ENCODE measurements at regions of chr2 and their contacts with region 1.

Region 1: GRCh38 chr2:39513641-39514094 is 76.6 kb upstream of the MAP4K3 start:
- DNase-seq: peak; percentile 95
- H3K4me3 ChIP-seq: no peak overlapping the region
- H3K27ac ChIP-seq: peak overlapping the region; percentile 31
- H3K4me1 ChIP-seq: peaks cover 11% of the 10 kb centered on the region
- H3K27me3 ChIP-seq: no peaks in the 10 kb centered on the region
- CTCF ChIP-seq: peak; percentile 79 to 83

Region 2: DNA sequence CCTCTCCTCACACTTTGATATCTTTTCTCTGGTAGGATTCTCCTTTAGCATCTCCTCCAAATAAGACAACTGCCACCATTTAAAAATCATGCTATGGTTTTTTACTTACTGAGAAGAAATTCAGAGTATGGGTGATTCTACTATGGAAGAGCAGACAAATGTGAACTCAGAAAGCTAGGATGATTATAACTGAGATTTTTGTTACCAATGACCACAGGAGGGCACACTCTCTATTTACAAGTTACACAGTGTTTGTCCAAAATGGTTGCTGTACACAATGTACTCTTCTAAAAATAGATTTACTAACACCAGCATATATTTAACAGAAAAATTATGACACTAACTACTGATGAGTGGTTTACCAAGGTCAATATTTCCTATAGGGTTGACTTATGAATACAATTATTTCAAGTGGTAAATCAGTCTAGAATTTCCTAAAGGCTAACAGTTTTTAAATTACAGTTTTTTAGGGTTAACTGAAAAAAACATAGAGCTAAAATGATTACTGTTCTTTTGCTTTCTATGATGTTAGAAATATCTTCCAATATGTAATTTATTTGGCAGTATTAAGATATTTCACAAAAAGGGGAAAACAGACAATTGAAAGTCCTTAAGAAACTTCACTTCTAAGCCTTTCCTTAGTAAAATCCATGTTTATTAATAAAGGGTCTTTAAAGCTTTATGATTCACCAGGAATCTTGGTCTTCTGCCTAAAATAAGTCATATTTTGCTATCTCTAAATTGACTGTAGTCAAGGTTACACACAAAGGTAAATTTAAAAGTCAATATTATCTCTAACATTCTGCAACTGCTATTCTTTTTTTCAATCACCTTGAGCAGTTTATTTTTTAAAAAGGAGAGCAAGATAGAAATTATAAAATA is 133.8 kb before region 1 on chr2:
- CTCF ChIA-PET with region 1: no interaction called
- dilution Hi-C with region 1: no loop called
- in situ Hi-C with region 1: no loop called
- intact Hi-C with region 1: loop called (anchors 1 kb)
- DNase-seq: peak; percentile 36
- H3K4me3 ChIP-seq: no peak overlapping the region
- H3K27ac ChIP-seq: peak overlapping the region; percentile 59
- H3K4me1 ChIP-seq: no peaks in the 10 kb centered on the region
- H3K27me3 ChIP-seq: no peaks in the 10 kb centered on the region
- CTCF ChIP-seq: peak; percentile 49 to 61

Region 3: DNA sequence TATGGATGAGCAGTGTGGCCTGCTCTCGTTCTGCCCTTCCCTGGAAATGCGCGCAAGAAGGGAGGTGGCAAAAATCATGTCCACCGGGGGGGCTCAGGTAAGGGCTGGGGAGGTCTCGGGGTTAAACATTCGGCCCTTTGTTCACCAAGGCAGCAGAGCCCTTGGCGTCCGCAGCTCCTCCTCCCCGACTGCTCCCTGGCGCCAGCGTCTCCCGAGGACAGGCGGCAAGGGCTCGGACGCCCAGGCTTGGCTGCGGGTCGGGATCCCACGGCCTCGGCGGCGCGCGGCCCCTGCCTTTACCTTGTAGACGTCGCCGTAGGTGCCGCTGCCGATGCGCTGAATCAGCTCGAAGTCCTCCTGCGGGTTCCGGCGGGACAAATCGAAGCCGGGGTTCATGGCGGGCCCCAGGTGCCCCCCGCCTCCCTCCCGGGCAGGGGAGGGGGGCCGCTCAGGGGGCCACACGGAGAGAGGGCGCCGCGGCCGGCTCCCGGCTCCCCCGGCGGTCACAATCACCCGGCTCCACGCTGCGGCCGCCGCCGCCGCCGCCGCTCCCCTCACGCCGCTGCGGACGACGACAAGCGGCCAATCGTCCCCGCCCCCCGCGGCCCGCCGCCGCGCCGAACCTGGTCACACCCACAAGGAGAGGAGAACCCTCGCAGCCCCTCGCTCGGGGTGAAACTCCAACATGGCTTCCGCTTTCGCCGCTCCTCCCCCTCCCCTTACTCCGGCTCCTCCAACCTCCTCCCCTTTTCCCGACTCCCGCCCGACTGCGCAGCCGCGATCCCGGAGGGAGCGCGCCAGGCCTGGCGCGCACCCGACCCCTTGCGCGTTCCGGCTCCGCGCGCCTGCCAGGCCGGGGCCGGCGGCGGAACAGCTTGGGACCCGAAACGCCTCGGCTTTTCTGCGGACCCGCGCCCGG is 76.8 kb before region 1 on chr2 and contains the start of gene MAP4K3:
- CTCF ChIA-PET with region 1: no interaction called
- dilution Hi-C with region 1: no loop called
- in situ Hi-C with region 1: no loop called
- intact Hi-C with region 1: loop called (anchors 5 kb)
- DNase-seq: peak; percentile 94
- H3K4me3 ChIP-seq: peak within 1 kb of the TSS; percentile 81 to 94 (median 89)
- H3K27ac ChIP-seq: peak within 1 kb of the TSS; percentile 82
- H3K4me1 ChIP-seq: peaks cover 35% of the 10 kb centered on the region
- H3K27me3 ChIP-seq: no peaks in the 10 kb centered on the region
- CTCF ChIP-seq: no peak
- total RNA-seq, gene MAP4K3: 25.7 to 43.3 TPM

Region 4: DNA sequence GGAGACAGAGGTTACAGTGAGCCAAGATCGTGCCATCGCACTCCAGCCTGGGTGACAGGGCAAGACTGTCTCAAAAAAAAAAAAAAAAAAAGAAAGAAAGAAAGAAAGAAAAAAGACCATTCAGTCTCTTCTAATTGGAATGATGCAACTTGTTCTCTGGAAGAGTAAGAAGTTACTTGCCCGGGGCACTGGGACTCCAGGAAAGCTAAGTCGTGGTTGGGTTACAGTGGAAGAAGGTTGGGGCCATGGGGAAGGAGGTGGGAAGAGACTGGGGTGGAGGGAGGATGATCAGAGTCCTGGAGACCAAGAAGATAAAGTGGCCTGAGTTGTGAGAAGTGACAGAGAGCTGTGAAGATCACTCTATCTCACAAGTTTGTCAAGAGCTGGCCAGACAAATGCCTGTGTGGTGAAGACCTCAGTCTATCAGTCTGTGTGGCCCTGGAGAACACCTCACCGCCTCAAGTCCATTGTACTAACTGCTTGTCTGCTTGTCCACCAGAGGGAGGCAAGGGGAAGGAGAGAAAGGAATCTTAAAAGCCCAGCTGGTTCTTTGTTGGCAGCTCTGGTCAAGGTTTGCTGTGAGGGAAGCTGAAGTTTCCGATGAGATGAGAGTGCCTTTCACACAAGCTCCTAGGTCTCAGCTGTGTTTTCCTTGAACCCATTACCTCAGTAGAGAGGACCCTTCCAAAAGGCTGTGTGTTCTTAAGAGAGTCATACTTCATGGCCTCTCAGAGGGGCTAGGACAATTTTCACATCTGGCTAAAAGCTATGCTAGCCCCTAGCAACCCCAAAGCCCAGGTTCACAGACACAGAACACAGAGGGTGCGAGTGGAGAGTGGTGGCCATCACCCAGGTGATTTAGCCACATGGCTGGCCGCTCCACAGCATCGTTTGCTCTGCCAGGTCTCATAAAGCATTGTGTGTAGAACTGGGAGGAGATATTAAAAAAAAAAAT is 80.0 kb after region 1 on chr2:
- CTCF ChIA-PET with region 1: interaction called, 13 read pairs
- dilution Hi-C with region 1: no loop called
- in situ Hi-C with region 1: no loop called
- intact Hi-C with region 1: no loop called
- DNase-seq: peak; percentile 66
- H3K4me3 ChIP-seq: no peak overlapping the region
- H3K27ac ChIP-seq: no peak overlapping the region
- H3K4me1 ChIP-seq: no peaks in the 10 kb centered on the region
- H3K27me3 ChIP-seq: no peaks in the 10 kb centered on the region
- CTCF ChIP-seq: peak; percentile 63 to 75

Region 5: DNA sequence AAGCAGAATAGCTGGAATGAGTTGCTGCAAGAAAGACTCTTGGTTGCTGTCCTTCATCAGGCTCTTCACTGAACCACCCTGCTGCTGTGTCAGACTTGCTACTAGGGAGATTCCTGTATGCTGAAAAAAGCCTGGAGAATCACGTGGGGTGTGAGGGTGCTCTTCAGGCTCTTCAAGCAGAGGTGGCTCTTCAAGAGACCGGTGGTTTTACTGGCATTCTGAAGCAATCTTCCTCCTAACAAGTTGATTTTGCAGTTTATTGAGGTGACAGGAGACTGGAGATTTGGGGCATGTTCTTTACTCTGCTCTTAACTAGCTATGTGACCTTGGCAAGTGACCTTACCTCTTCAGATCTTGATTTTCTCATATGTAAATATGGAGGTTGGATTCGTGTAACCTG is 166.1 kb after region 1 on chr2:
- CTCF ChIA-PET with region 1: no interaction called
- dilution Hi-C with region 1: no loop called
- in situ Hi-C with region 1: no loop called
- intact Hi-C with region 1: no loop called
- DNase-seq: no peak
- H3K4me3 ChIP-seq: no peak overlapping the region
- H3K27ac ChIP-seq: no peak overlapping the region
- H3K4me1 ChIP-seq: no peaks in the 10 kb centered on the region
- H3K27me3 ChIP-seq: no peaks in the 10 kb centered on the region
- CTCF ChIP-seq: no peak

Region 6: DNA sequence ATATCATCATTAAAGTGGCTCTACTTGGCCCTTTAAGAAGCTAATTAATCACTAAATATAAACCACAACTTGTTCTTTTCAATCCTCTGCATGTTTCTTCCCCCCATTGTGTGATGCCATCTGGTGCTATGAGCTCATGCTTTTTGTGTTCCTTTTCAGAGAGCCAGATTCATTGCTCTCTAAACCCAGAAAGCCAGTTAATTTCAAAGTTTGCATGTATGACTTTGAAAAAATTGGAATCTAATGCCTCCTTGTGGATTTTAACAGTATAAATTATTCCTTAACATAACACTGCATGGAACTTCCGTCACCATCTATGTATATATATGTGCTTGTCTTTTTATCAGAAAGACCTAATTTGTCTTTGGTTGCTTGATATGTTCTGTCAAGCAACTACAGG is 183.2 kb after region 1 on chr2:
- CTCF ChIA-PET with region 1: no interaction called
- dilution Hi-C with region 1: no loop called
- in situ Hi-C with region 1: loop called in 1 of 2 experiments (anchors 10 kb)
- intact Hi-C with region 1: loop called (anchors 1 kb)
- DNase-seq: peak; percentile 53
- H3K4me3 ChIP-seq: no peak overlapping the region
- H3K27ac ChIP-seq: no peak overlapping the region
- H3K4me1 ChIP-seq: peaks cover 7% of the 10 kb centered on the region
- H3K27me3 ChIP-seq: no peaks in the 10 kb centered on the region
- CTCF ChIP-seq: peak; percentile 37 to 39

Region 7: DNA sequence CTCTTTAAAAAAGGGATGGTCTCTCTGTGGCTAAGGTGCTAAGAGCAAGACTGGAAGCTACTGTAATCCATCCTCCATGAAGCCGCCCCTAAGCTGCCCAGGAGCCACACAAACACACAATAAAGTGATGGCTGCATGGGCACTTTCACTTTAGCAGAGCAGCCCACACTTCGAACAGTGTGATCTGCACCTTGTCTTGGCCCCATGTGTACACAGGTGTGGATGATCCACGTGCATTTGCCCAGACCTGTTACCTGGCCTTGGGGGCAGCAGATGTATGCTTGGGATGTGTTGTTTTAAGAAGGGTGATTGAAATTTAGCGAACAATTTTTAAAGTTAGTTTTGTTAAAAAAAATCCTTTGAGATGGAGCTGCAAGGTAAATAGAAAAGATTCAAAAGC is 192.0 kb after region 1 on chr2:
- CTCF ChIA-PET with region 1: no interaction called
- dilution Hi-C with region 1: no loop called
- in situ Hi-C with region 1: loop called in 1 of 2 experiments (anchors 10 kb)
- intact Hi-C with region 1: no loop called
- DNase-seq: no peak
- H3K4me3 ChIP-seq: no peak overlapping the region
- H3K27ac ChIP-seq: no peak overlapping the region
- H3K4me1 ChIP-seq: peaks cover 10% of the 10 kb centered on the region
- H3K27me3 ChIP-seq: no peaks in the 10 kb centered on the region
- CTCF ChIP-seq: no peak

Region 8: DNA sequence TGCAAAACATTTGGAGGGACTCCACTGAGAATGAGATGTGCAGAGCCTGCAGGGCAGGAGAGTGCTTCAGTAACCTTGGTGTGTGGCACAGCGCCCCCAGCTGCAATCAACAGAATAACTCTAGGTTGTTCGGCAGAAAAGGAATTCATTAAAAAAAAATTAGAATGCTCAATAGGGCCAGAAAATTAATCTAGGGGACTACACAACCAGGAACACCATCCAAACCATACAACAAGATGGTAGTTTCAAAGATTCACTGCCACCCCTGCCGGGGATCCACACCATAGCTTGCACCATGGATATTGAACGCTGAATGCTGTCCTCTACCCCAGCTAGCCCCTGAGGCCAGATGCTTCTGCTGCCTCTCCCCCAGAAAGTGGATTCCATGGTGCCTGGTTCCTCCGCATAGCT is 215.3 kb after region 1 on chr2:
- CTCF ChIA-PET with region 1: interaction called, 3 read pairs
- dilution Hi-C with region 1: no loop called
- in situ Hi-C with region 1: no loop called
- intact Hi-C with region 1: loop called (anchors 1 kb)
- DNase-seq: no peak
- H3K4me3 ChIP-seq: no peak overlapping the region
- H3K27ac ChIP-seq: no peak overlapping the region
- H3K4me1 ChIP-seq: peaks cover 23% of the 10 kb centered on the region
- H3K27me3 ChIP-seq: no peaks in the 10 kb centered on the region
- CTCF ChIP-seq: peak; percentile 79 to 90

Region 9: GRCh38 chr2:39871291-39871761 is 357.7 kb after region 1 on chr2:
- CTCF ChIA-PET with region 1: no interaction called
- dilution Hi-C with region 1: no loop called
- in situ Hi-C with region 1: no loop called
- intact Hi-C with region 1: no loop called
- DNase-seq: peak; percentile 89
- H3K4me3 ChIP-seq: no peak overlapping the region
- H3K27ac ChIP-seq: no peak overlapping the region
- H3K4me1 ChIP-seq: peaks cover 32% of the 10 kb centered on the region
- H3K27me3 ChIP-seq: no peaks in the 10 kb centered on the region
- CTCF ChIP-seq: no peak